Activated T-helper 1 cell treated with anti-CD3 and anti-CD28 coated beads, Interleukin-12 subunit alpha, Interleukin-12 subunit beta, Interleukin-2, Interleukin-4 antibody, amounts not matched to agents 30 ng/mL and 10 ng/mL and 1 ng/mL, durations not matched to agents 14 hours and 24 hours and 36 hours (primary cell): ENCODE measurements at regions of chr9 and their contacts with region 1.

Region 1: GRCh38 chr9:27726244-27727081 is 153.2 kb upstream of the C9orf72 start:
- DNase-seq: peak; percentile 6
- H3K4me3 Mint-ChIP-seq: no peak overlapping the region
- H3K27ac Mint-ChIP-seq: no peak overlapping the region
- H3K4me1 Mint-ChIP-seq: no peaks in the 10 kb centered on the region
- H3K27me3 Mint-ChIP-seq: peaks cover 7% of the 10 kb centered on the region

Region 2: DNA sequence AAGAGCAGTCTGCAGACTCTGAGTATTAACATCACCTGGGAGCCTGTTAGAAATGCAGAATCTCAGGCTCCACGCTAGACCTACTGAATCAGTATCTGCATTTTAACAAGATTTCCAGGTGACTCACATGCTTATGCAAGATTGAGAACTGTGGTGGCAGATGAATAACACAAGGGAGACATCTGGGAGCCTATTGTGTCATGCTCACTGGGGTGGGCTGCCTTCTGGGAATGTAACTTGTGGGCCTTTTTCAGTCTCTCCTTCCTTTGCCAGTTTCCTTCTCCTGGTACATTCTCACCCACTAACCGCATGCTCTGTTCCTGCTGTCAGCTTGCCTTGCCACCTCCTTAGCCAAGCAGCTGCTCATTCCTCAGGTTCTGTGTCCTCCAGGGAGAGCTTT is 23.4 kb after region 1 on chr9:
- intact Hi-C with region 1: no loop called
- DNase-seq: no peak
- H3K4me3 Mint-ChIP-seq: no peak overlapping the region
- H3K27ac Mint-ChIP-seq: no peak overlapping the region
- H3K4me1 Mint-ChIP-seq: no peaks in the 10 kb centered on the region
- H3K27me3 Mint-ChIP-seq: peaks cover 5% of the 10 kb centered on the region

Region 3: DNA sequence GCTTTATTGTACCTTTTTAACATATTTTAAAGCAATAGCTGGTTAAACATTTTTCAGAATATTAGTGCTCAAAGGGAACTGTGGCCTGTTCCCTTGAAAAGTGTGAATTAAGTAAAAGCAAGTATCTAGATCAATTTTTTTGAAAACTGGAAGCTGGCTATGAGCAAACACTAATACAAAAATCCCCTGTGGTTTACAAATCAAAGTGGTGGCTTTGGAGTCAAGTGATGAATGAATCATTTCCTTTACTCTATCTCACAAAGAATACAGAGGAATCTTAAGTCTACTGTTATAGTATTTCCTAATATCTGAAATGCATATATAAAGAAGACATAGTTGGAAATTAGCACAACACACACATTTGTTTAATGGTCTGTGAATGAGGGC is 59.2 kb after region 1 on chr9:
- intact Hi-C with region 1: loop called (anchors 2 kb)
- DNase-seq: no peak
- H3K4me3 Mint-ChIP-seq: no peak overlapping the region
- H3K27ac Mint-ChIP-seq: peak overlapping the region; percentile 59
- H3K4me1 Mint-ChIP-seq: peaks cover 14% of the 10 kb centered on the region
- H3K27me3 Mint-ChIP-seq: peaks cover 5% of the 10 kb centered on the region

Region 4: DNA sequence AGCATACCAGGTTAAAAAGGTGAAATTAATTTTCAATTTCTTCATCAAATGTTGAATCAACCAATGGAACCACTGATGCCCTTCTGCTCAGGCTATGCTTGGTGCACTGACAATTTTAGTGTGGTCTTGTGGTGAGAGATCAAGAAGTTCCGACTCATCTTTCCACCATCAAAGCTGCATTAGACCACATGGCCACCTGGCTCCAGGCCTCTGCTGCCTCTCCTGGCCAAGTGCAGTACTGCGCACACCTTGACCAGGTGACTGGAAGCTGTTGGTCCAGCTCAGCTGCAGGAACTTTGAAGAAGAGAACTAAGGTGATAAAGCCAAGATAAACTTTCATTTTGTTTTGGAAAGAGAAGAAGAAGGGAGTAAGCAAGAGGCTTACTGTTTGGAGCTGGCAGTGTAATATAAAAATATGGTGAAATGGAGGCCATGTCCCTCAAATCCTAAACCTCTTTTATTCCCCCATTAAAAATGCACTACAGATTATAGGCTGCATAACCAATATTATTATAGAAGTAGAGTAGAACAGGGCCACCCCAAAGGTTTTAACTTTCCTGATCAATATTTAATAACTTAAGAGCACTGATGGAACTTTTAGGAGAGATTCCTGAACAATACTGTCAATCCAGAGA is 162.3 kb after region 1 on chr9:
- intact Hi-C with region 1: loop called (anchors 1 kb)
- DNase-seq: no peak
- H3K4me3 Mint-ChIP-seq: no peak overlapping the region
- H3K27ac Mint-ChIP-seq: no peak overlapping the region
- H3K4me1 Mint-ChIP-seq: no peaks in the 10 kb centered on the region
- H3K27me3 Mint-ChIP-seq: peaks cover 2% of the 10 kb centered on the region

Region 5: DNA sequence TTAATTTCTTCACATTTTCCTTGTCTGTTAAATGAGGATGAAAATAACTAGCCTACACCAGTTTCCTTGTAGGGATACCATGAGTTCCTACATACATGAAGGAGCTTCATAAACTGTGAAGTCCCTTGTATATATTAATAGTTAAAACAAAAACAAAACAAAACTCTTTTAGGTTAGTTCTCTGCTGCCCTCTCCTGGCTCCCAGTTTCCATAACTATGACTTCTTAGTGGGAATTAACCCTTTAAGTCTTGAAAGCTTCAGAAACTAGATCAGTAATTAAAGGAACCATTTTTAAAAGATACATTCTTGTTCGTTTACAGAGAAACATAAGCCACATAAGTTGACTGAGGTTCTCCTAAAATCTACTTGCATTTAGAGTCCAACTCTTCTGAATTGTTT is 346.8 kb after region 1 on chr9:
- intact Hi-C with region 1: loop called (anchors 1 kb)
- DNase-seq: no peak
- H3K4me3 Mint-ChIP-seq: no peak overlapping the region
- H3K27ac Mint-ChIP-seq: no peak overlapping the region
- H3K4me1 Mint-ChIP-seq: no peaks in the 10 kb centered on the region
- H3K27me3 Mint-ChIP-seq: no peaks in the 10 kb centered on the region

Region 6: GRCh38 chr9:28317745-28318144 is 591.3 kb after region 1 on chr9:
- intact Hi-C with region 1: no loop called
- DNase-seq: no peak
- H3K4me3 Mint-ChIP-seq: no peak overlapping the region
- H3K27ac Mint-ChIP-seq: no peak overlapping the region
- H3K4me1 Mint-ChIP-seq: no peaks in the 10 kb centered on the region
- H3K27me3 Mint-ChIP-seq: no peaks in the 10 kb centered on the region

Region 7: DNA sequence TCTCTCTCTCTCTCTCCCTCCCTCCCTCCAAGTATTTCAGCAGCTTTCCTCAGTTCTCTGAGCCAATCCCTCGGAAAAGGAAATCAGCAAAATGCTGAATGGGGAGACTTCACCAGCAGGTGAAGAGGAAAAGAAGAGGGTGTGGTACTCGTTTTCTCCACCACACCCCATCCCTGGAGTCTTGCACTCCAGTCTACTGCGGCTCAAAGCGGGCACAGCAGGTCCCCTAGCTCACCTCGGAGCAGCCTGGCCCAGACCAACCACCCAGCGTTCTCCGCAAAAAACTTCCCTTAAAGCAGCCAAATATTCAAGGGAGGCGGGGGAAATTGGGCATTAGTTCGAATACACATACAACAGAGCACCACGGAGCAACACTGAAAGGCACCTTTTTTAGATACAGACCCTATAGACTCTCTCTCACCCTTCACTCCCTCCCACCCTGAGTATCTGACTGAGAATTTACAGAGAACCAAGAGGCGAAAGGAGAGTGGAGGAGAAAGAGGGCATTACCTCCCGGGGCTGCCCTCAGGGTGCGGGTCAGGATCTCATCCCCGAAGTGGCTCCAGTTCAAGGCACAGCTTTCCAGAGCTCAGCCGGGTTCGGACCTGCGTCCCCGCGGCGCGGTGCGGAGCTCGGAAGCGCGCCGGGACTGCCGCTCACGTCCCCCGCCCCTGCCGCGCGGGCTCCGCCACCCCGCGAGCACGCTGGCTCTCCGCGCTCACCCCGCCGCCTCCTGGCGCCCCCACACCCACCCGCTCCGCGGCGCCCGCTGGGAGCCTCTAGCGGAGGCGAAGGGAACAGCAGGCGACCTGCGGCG is 1485.3 kb after region 1 on chr9:
- intact Hi-C with region 1: loop called (anchors 10 kb)
- DNase-seq: no peak
- H3K4me3 Mint-ChIP-seq: no peak overlapping the region
- H3K27ac Mint-ChIP-seq: no peak overlapping the region
- H3K4me1 Mint-ChIP-seq: no peaks in the 10 kb centered on the region
- H3K27me3 Mint-ChIP-seq: peaks cover 52% of the 10 kb centered on the region